ENCODE measurements at regions of chr6 and their contacts with region 1.

Region 1: GRCh38 chr6:138572167-138572865 is 73.0 kb upstream of the NHSL1 start:
- DNase-seq: peak; percentile 89 to 91
- H3K4me3 ChIP-seq: peak overlapping the region; percentile 58
- H3K4me3 Mint-ChIP-seq: no peak overlapping the region
- H3K27ac Mint-ChIP-seq: no peak overlapping the region
- H3K4me1 ChIP-seq: peaks cover 14% of the 10 kb centered on the region; the same call in 1 of the 2 replicates
- H3K4me1 Mint-ChIP-seq: peaks cover 7% of the 10 kb centered on the region
- H3K27me3 ChIP-seq: no peaks in the 10 kb centered on the region
- H3K27me3 Mint-ChIP-seq: no peaks in the 10 kb centered on the region
- CTCF ChIP-seq: no peak

Region 2: DNA sequence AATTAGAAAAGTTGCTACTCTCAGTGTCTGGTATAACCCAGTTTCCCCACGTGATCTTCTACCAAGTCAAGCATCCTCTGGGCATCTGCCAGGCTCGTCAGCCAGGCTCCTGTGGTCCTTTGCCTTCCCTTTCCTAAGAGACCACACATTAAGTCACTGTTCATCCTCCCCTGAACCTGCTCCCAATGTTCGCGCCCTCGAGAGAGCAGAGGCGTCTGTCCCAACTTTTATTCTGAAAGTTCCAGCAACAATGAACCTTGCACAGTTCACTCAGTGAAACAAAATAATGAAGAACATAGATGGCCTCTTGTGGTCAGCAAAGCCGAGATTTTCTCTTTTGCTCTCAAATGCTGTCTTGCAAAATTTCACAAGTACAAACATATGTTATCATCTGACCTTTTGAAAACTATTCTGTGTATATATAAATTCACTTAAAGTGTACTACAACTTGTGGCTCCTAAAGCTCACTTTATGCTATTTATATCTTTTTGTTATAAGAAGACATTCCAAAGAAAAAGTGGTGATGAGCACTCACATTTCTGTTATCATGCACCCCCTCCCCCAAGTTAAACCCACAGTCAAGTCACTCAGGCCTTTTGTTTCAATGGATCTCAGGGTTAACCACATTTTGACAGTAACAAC is 33.8 kb before region 1 on chr6:
- CTCF ChIA-PET with region 1: no interaction called
- POLR2A ChIA-PET with region 1: no interaction called
- intact Hi-C with region 1: loop called (anchors 5 kb)
- DNase-seq: no peak
- H3K4me3 ChIP-seq: no peak overlapping the region
- H3K4me3 Mint-ChIP-seq: no peak overlapping the region
- H3K27ac Mint-ChIP-seq: peak overlapping the region; percentile 76
- H3K4me1 ChIP-seq: peaks cover 85% of the 10 kb centered on the region
- H3K4me1 Mint-ChIP-seq: peaks cover 50% of the 10 kb centered on the region
- H3K27me3 ChIP-seq: no peaks in the 10 kb centered on the region
- H3K27me3 Mint-ChIP-seq: no peaks in the 10 kb centered on the region
- CTCF ChIP-seq: no peak

Region 3: GRCh38 chr6:138550346-138550767 is 22.0 kb before region 1 on chr6:
- CTCF ChIA-PET with region 1: no interaction called
- POLR2A ChIA-PET with region 1: interaction called, 4 read pairs
- intact Hi-C with region 1: loop called (anchors 1 kb)
- DNase-seq: peak; percentile 64 to 72
- H3K4me3 ChIP-seq: no peak overlapping the region
- H3K4me3 Mint-ChIP-seq: peak overlapping the region; percentile 46
- H3K27ac Mint-ChIP-seq: peak overlapping the region; percentile 99
- H3K4me1 ChIP-seq: peaks cover 83% of the 10 kb centered on the region
- H3K4me1 Mint-ChIP-seq: peaks cover 63% of the 10 kb centered on the region
- H3K27me3 ChIP-seq: no peaks in the 10 kb centered on the region
- H3K27me3 Mint-ChIP-seq: no peaks in the 10 kb centered on the region
- CTCF ChIP-seq: no peak

Region 4: GRCh38 chr6:138555421-138555988 is 16.8 kb before region 1 on chr6:
- CTCF ChIA-PET with region 1: no interaction called
- POLR2A ChIA-PET with region 1: interaction called, 5 read pairs
- intact Hi-C with region 1: loop called (anchors 1 kb)
- DNase-seq: peak; percentile 67 to 69
- H3K4me3 ChIP-seq: no peak overlapping the region
- H3K4me3 Mint-ChIP-seq: peak overlapping the region; percentile 77
- H3K27ac Mint-ChIP-seq: peak overlapping the region; percentile 99
- H3K4me1 ChIP-seq: peaks cover 83% of the 10 kb centered on the region
- H3K4me1 Mint-ChIP-seq: peaks cover 59% of the 10 kb centered on the region
- H3K27me3 ChIP-seq: no peaks in the 10 kb centered on the region
- H3K27me3 Mint-ChIP-seq: no peaks in the 10 kb centered on the region
- CTCF ChIP-seq: no peak

Region 5: GRCh38 chr6:138638604-138639003 is 66.3 kb after region 1 on chr6:
- CTCF ChIA-PET with region 1: no interaction called
- POLR2A ChIA-PET with region 1: no interaction called
- intact Hi-C with region 1: no loop called
- DNase-seq: no peak
- H3K4me3 ChIP-seq: no peak overlapping the region
- H3K4me3 Mint-ChIP-seq: no peak overlapping the region
- H3K27ac Mint-ChIP-seq: no peak overlapping the region
- H3K4me1 ChIP-seq: peaks cover 8% of the 10 kb centered on the region
- H3K4me1 Mint-ChIP-seq: peaks cover 7% of the 10 kb centered on the region
- H3K27me3 ChIP-seq: no peaks in the 10 kb centered on the region
- H3K27me3 Mint-ChIP-seq: no peaks in the 10 kb centered on the region
- CTCF ChIP-seq: no peak

Region 6: GRCh38 chr6:138785980-138786379 is 213.7 kb after region 1 on chr6:
- CTCF ChIA-PET with region 1: no interaction called
- POLR2A ChIA-PET with region 1: no interaction called
- intact Hi-C with region 1: no loop called
- DNase-seq: no peak
- H3K4me3 ChIP-seq: no peak overlapping the region
- H3K4me3 Mint-ChIP-seq: no peak overlapping the region
- H3K27ac Mint-ChIP-seq: no peak overlapping the region
- H3K4me1 ChIP-seq: no peaks in the 10 kb centered on the region
- H3K4me1 Mint-ChIP-seq: no peaks in the 10 kb centered on the region
- H3K27me3 ChIP-seq: no peaks in the 10 kb centered on the region
- H3K27me3 Mint-ChIP-seq: no peaks in the 10 kb centered on the region
- CTCF ChIP-seq: no peak

Measured in Caco-2 (cell line).